Activated T-helper 2 cell treated with anti-CD3 and anti-CD28 coated beads, Interferon-gamma antibody, Interleukin-2, Interleukin-4, amounts not matched to agents 10 μg/mL and 5 μg/mL and 100 μg/mL, durations not matched to agents 14 hours and 24 hours and 36 hours (primary cell): ENCODE measurements at regions of chr6 and their contacts with region 1.

Region 1: GRCh38 chr6:45479834-45480751 is 102.4 kb upstream of the SUPT3H start:
- DNase-seq: no peak
- H3K4me3 Mint-ChIP-seq: no peak overlapping the region
- H3K27ac Mint-ChIP-seq: peak overlapping the region; percentile 74
- H3K4me1 Mint-ChIP-seq: peaks cover 52% of the 10 kb centered on the region
- H3K27me3 Mint-ChIP-seq: no peaks in the 10 kb centered on the region

Region 2: GRCh38 chr6:45436544-45437438 is 43.3 kb before region 1 on chr6:
- intact Hi-C with region 1: loop called (anchors 5 kb)
- DNase-seq: no peak
- H3K4me3 Mint-ChIP-seq: peak overlapping the region; percentile 82
- H3K27ac Mint-ChIP-seq: peak overlapping the region; percentile 98
- H3K4me1 Mint-ChIP-seq: peaks cover 84% of the 10 kb centered on the region
- H3K27me3 Mint-ChIP-seq: no peaks in the 10 kb centered on the region

Region 3: GRCh38 chr6:45462190-45463134 is 17.6 kb before region 1 on chr6:
- intact Hi-C with region 1: no loop called
- DNase-seq: no peak
- H3K4me3 Mint-ChIP-seq: no peak overlapping the region
- H3K27ac Mint-ChIP-seq: peak overlapping the region; percentile 75
- H3K4me1 Mint-ChIP-seq: peaks cover 37% of the 10 kb centered on the region
- H3K27me3 Mint-ChIP-seq: no peaks in the 10 kb centered on the region

Region 4: DNA sequence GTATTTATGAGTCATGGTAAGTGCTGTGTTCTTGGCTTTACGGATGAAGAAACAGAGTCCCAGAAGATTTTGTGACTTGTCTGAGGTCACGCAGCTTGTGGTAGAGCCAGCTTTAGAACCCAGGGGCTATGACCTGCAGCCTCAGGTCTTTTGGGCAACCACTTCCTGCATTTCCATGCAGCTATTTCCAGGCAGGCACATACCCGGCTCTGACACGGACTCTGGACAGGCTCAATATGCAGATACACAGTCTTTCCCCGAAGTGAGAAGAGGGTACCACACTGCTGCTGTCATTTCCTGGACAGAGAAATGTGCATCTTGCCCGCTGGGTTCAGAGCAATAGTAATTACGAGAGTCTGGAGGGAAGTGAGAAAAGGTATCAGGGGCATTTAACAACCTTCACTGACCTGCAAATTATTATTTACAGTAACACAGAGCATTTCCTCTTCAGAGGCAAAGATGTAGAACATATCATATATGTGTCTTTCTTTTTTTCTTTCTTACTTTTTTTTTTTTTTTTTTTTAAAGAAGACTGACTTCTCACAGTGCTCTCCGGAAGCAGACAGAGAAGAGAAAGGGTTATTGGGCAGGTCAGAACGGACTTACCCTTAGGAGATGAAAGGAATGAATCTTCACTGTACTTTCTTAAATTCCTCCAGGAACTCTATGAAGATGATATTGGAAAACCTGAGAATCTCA is 350.5 kb after region 1 on chr6:
- intact Hi-C with region 1: loop called (anchors 5 kb)
- DNase-seq: peak; percentile 48
- H3K4me3 Mint-ChIP-seq: peak overlapping the region; percentile 79
- H3K27ac Mint-ChIP-seq: peak overlapping the region; percentile 94
- H3K4me1 Mint-ChIP-seq: peaks cover 61% of the 10 kb centered on the region
- H3K27me3 Mint-ChIP-seq: no peaks in the 10 kb centered on the region

Region 5: DNA sequence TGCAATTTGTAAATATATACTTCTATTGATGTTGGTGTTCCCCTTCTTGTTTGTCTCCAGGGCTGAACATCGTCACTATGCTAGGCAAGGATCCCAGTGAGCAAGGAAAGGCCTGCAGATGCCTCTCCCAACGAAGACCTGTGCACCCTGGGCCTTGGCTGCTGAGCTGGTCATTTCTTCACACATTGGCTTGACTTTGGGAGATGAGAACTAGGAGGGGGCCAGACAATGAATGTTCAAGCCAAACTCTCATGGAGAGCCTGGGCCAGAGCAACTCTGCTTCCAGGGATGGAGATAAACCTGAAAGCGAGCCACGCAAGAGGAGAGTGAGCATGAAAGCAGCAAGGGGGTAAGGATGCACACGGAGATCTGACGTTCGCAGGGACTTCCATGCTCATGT is 431.6 kb after region 1 on chr6:
- intact Hi-C with region 1: no loop called
- DNase-seq: no peak
- H3K4me3 Mint-ChIP-seq: no peak overlapping the region
- H3K27ac Mint-ChIP-seq: no peak overlapping the region
- H3K4me1 Mint-ChIP-seq: no peaks in the 10 kb centered on the region
- H3K27me3 Mint-ChIP-seq: no peaks in the 10 kb centered on the region